Lower lobe of right lung (tissue), 2 donors: ENCODE measurements at regions of chr14 and their contacts with region 1.

Region 1: DNA sequence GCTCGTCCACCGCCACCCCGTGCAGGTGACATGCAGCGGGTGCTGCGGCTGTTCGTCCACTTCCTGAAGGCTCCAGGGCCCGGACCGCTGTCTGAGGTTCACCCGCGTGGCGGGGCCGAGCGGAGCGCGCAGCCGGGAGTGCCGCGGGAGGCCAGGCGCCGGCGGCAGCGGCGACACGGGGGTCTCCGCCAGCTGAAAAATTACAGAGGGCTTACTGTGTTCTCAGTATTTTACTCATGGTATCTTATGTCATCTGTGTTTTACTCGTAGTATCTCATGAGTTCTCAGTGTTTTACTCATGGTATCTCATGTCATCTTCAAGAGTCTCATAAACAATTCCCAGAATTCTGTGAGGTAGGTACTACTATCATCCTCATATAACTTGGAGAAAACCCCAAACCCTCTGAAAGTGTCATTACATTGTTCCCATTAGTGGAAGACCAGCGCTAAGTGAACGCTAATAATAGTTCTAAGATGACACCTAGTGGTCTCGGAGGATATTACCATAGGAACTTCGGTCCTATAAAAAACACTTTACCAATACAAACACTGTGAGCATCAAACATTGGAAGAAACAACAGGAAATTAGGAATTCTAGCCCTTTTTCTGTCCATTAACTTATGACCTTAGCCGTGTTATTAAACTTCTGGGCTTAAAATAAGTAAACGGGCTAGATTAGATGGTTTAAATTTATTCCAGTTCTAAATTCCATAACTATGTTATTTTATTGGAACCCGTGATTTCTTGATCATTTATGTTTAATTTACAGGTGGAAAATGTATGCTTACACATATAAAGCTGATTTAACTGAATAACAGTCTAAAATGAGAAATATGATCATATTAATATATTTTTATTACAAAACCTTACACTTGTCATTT is 32.4 kb downstream of the AK7 start:
- DNase-seq: peak; percentile 54
- ATAC-seq: peak; percentile 92 to 93
- H3K4me3 ChIP-seq: peak overlapping the region; percentile 49
- H3K27ac ChIP-seq: no peak overlapping the region
- H3K4me1 ChIP-seq: no peaks in the 10 kb centered on the region
- H3K27me3 ChIP-seq: no peaks in the 10 kb centered on the region
- CTCF ChIP-seq: peak; percentile 82

Region 2: GRCh38 chr14:96297000-96297399 is 127.3 kb before region 1 on chr14:
- intact Hi-C with region 1: loop called (anchors 10 kb)
- DNase-seq: no peak
- ATAC-seq: no peak
- H3K4me3 ChIP-seq: no peak overlapping the region
- H3K27ac ChIP-seq: no peak overlapping the region
- H3K4me1 ChIP-seq: no peaks in the 10 kb centered on the region
- H3K27me3 ChIP-seq: no peaks in the 10 kb centered on the region
- CTCF ChIP-seq: peak; percentile 41

Region 3: DNA sequence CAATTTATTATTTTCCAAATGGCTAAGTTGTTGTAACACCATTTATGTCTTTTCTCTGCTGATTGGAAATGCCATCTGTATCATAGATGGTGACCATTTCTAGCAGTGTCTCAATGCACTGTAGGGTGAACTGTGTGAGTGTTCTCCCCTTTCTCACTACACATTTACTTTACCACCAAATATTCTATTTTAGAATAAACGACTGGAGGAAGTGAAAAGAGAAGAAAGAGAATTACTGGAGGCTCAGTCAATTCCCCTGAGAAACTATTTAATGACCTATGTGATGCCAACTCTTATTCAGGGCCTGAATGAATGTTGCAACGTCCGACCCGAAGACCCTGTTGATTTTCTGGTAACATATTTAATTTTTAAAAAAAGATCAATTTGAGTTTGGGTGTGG is 62.4 kb after region 1 on chr14:
- intact Hi-C with region 1: no loop called
- DNase-seq: no peak
- ATAC-seq: no peak
- H3K4me3 ChIP-seq: no peak overlapping the region
- H3K27ac ChIP-seq: no peak overlapping the region
- H3K4me1 ChIP-seq: no peaks in the 10 kb centered on the region
- H3K27me3 ChIP-seq: no peaks in the 10 kb centered on the region
- CTCF ChIP-seq: no peak